ENCODE measurements at regions of chr4 and their contacts with region 1.

Region 1: GRCh38 chr4:128809477-128810330 is at the start of gene JADE1:
- DNase-seq: peak; percentile 94
- ATAC-seq: peak; percentile 69
- H3K4me3 Mint-ChIP-seq: peak within 1 kb of the TSS; percentile 93
- H3K27ac Mint-ChIP-seq: peak within 1 kb of the TSS; percentile 99
- H3K4me1 Mint-ChIP-seq: peaks cover 13% of the 10 kb centered on the region
- H3K27me3 Mint-ChIP-seq: no peaks in the 10 kb centered on the region
- total RNA-seq, gene JADE1: 25.5 to 28.4 TPM

Region 2: DNA sequence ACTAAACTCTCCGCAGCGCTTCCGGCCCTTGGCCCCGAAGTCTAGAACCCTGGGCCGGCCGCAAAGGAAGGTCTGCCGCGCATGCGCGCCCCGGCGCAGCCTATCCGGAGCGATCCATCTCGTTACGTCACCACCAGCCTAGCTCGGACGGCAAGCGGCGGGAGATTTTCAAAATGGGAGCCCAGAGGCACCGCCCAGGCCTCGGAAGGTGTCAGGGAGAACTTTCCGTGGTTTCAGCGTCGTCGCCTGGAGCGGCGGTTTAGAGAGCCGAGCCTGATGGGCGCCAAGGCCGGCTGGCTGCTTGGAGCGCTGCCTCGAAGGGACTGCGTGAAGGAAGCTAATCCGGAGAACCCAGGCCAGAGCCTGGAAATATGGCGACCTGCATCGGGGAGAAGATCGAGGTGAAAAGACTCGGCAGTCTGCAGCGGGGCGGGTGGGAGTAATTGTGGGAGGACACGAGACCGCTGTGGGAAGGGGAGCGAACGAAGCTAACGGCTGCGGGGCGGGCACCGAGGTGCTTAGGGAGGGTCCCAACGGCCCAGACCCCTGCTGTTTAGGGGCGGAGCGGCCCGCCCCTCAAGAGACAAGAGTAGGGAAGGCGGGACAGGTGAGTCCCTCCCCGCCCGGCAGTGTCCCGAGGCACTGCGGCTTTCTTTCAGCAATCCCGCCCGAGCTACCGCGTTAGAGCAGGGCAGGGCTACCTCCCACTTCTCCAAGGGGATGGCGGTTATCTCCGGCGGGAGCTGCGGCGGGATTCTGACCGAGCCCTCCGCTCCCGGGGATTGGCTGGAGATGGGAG is 928.7 kb before region 1 on chr4 and contains the start of gene PLK4:
- CTCF ChIA-PET with region 1: no interaction called
- POLR2A ChIA-PET with region 1: no interaction called
- intact Hi-C with region 1: loop called in 1 of 2 experiments (anchors 1 kb)
- DNase-seq: peak; percentile 97
- ATAC-seq: peak; percentile 97
- H3K4me3 Mint-ChIP-seq: peak within 1 kb of the TSS; percentile 97
- H3K27ac Mint-ChIP-seq: peak within 1 kb of the TSS; percentile 98
- H3K4me1 Mint-ChIP-seq: peaks cover 24% of the 10 kb centered on the region
- H3K27me3 Mint-ChIP-seq: no peaks in the 10 kb centered on the region
- total RNA-seq, gene PLK4: 44.4 to 52.3 TPM

Region 3: GRCh38 chr4:128060699-128061565 is 748.8 kb before region 1 on chr4 and contains the start of gene LARP1B:
- CTCF ChIA-PET with region 1: no interaction called
- POLR2A ChIA-PET with region 1: interaction called, 7 read pairs
- intact Hi-C with region 1: loop called (anchors 1 to 2 kb)
- DNase-seq: peak; percentile 96
- ATAC-seq: peak; percentile 92
- H3K4me3 Mint-ChIP-seq: peak within 1 kb of the TSS; percentile 81
- H3K27ac Mint-ChIP-seq: peak within 1 kb of the TSS; percentile 93
- H3K4me1 Mint-ChIP-seq: peaks cover 14% of the 10 kb centered on the region
- H3K27me3 Mint-ChIP-seq: no peaks in the 10 kb centered on the region
- total RNA-seq, gene LARP1B: 22.1 to 26.0 TPM

Region 4: GRCh38 chr4:128287871-128288688 is 521.6 kb before region 1 on chr4:
- CTCF ChIA-PET with region 1: interaction called, 3 read pairs
- POLR2A ChIA-PET with region 1: no interaction called
- intact Hi-C with region 1: loop called (anchors 1 kb)
- DNase-seq: peak; percentile 100
- ATAC-seq: peak; percentile 85
- H3K4me3 Mint-ChIP-seq: peak overlapping the region; percentile 79
- H3K27ac Mint-ChIP-seq: peak overlapping the region; percentile 93
- H3K4me1 Mint-ChIP-seq: peaks cover 27% of the 10 kb centered on the region
- H3K27me3 Mint-ChIP-seq: no peaks in the 10 kb centered on the region

Region 5: DNA sequence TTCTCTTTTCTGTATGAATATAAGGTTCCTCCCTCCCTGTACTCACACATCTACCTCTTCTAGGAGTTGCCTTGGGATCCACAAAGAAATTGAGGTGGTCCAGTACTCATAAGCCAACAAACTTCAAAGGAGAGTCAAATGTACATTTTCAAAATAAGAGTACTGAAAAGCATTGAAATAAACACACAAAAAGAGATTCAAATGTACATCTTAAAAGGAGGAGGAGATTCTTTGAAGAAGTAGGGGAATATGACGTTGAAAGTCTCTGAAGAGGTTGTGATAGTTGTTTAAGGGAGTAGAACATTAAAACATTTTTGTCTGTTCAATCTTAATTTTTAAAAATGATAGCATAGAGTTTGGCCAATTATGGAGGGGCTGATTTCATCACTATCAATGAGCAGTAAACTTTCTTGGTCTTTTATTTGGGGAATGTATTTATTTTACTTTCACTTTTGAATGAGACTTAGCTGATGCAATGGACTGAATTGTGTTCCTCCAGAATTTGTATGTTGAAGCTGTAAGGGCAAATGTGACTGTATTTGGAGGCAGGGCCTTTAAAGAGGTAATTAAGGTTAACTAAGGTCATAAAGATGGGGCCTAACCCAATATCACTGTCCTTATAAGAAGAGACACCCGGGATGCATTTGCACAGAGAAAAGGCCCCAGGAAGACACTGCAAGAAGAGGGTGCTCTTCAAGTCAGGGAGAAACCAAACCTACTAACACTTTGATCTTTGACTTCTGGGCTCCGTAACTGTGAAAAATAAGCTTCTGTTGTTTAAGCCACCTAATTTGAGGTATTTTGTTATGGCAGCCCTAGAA is 295.8 kb before region 1 on chr4:
- CTCF ChIA-PET with region 1: no interaction called
- POLR2A ChIA-PET with region 1: no interaction called
- intact Hi-C with region 1: loop called in 1 of 2 experiments (anchors 5 kb)
- DNase-seq: no peak
- ATAC-seq: peak; percentile 62
- H3K4me3 Mint-ChIP-seq: peak overlapping the region; percentile 36
- H3K27ac Mint-ChIP-seq: peak overlapping the region; percentile 92
- H3K4me1 Mint-ChIP-seq: peaks cover 12% of the 10 kb centered on the region
- H3K27me3 Mint-ChIP-seq: no peaks in the 10 kb centered on the region

Region 6: DNA sequence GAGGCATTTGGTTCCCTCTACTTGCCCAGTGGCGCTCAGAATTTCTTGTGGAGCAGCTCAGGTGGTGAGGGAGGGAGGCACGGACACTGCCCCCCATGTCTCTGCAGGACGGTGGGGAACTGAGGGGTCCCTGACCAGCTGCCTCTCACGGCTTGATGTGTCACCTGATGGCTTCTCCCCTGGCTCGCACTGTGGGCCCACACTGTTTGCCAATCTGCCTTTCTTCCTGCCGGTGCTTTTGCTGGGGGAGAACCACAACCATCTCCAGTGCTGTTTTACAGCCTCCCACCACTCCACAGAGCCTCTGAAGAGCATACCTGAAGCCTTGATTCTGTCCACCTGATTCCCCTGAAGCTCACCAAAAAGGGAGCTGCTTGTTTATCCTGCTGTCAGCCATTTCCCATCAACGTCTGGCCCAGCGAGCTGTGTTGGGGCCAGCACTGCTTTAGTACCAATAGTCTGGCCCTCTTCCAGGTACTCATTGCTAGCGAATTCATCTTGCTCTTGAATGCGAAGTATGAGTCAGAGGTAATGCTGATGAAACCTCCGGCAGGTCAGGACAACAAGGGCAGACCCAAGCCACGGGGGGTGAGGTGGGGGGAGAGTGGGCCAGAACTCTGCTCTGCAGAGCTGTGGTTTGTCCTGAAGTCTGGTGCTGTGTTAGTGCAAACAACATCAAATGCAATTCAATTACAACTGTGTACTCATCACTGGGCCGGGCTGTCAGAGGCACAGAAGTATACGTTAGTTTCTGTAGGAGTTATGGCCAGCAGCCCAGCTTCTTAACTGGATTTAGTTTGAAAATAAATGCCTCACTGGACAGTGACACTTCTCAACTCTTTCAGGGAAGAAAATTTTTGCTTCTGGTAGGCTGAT is 208.5 kb before region 1 on chr4:
- CTCF ChIA-PET with region 1: no interaction called
- POLR2A ChIA-PET with region 1: no interaction called
- intact Hi-C with region 1: no loop called
- DNase-seq: no peak
- ATAC-seq: no peak
- H3K4me3 Mint-ChIP-seq: no peak overlapping the region
- H3K27ac Mint-ChIP-seq: no peak overlapping the region
- H3K4me1 Mint-ChIP-seq: no peaks in the 10 kb centered on the region
- H3K27me3 Mint-ChIP-seq: peaks cover 16% of the 10 kb centered on the region

Region 7: GRCh38 chr4:128782076-128782715 is 27.5 kb before region 1 on chr4:
- CTCF ChIA-PET with region 1: interaction called, 3 read pairs
- POLR2A ChIA-PET with region 1: no interaction called
- intact Hi-C with region 1: loop called in 1 of 2 experiments (anchors 2 kb)
- DNase-seq: peak; percentile 59
- ATAC-seq: peak; percentile 65
- H3K4me3 Mint-ChIP-seq: no peak overlapping the region
- H3K27ac Mint-ChIP-seq: no peak overlapping the region
- H3K4me1 Mint-ChIP-seq: no peaks in the 10 kb centered on the region
- H3K27me3 Mint-ChIP-seq: peaks cover 2% of the 10 kb centered on the region

Region 8: GRCh38 chr4:128863312-128864075 is 53.8 kb after region 1 on chr4:
- CTCF ChIA-PET with region 1: interaction called, 7 read pairs
- POLR2A ChIA-PET with region 1: interaction called, 8 read pairs
- intact Hi-C with region 1: loop called (anchors 1 to 2 kb)
- DNase-seq: peak; percentile 79
- ATAC-seq: no peak
- H3K4me3 Mint-ChIP-seq: no peak overlapping the region
- H3K27ac Mint-ChIP-seq: peak overlapping the region; percentile 80
- H3K4me1 Mint-ChIP-seq: peaks cover 46% of the 10 kb centered on the region
- H3K27me3 Mint-ChIP-seq: no peaks in the 10 kb centered on the region